ENCODE measurements at regions of chr13 and their contacts with region 1.

Region 1: GRCh38 chr13:30796132-30796572 is 60.8 kb downstream of the ALOX5AP start:
- DNase-seq: no peak
- H3K4me3 ChIP-seq: no peak overlapping the region
- CTCF ChIP-seq: no peak

Region 2: GRCh38 chr13:30739761-30740642 is 56.1 kb before region 1 on chr13:
- in situ Hi-C with region 1: loop called (anchors 5 kb)
- DNase-seq: peak; percentile 65
- H3K4me3 ChIP-seq: no peak overlapping the region
- CTCF ChIP-seq: no peak

Region 3: DNA sequence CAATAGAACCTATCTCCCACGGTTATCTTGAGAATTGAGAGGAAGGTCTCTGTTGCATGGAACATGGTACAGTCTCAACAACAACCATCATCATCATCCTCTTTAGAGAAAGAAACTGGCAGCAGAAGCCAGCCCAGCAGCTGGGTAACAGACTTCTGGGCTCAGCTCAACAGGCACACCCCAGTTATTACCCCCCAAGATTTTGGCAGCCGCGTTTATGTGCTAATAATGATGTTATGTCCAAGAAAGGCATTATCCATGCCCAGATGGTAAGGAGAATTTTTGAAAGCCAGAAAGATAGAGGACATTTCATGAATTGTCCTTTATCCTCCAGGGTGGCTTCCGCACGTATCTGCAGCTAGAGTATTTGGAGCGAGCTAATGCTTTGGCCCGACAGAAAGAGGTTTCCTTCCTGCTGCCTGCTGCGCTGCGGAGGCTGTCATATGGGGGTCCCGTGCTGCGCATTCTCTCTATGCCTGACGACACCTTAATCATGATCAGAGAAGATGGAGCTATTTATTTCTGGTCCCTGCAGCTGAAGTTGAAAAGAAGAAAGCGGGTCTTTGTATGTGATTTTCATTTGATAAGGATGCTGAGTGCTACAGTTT is 226.2 kb after region 1 on chr13:
- in situ Hi-C with region 1: loop called (anchors 5 kb)
- DNase-seq: no peak
- H3K4me3 ChIP-seq: no peak overlapping the region
- CTCF ChIP-seq: no peak